Panc1 (cell line): ENCODE measurements at regions of chr9 and their contacts with region 1.

Region 1: GRCh38 chr9:102631559-102631958 is 363.6 kb upstream of the CYLC2 start:
- DNase-seq: peak; percentile 2
- ATAC-seq: no peak
- H3K4me3 ChIP-seq: no peak overlapping the region
- H3K27ac ChIP-seq: no peak overlapping the region
- H3K4me1 ChIP-seq: no peaks in the 10 kb centered on the region
- H3K27me3 ChIP-seq: no peaks in the 10 kb centered on the region
- CTCF ChIP-seq: peak; percentile 36

Region 2: GRCh38 chr9:102534031-102534430 is 97.5 kb before region 1 on chr9:
- CTCF ChIA-PET with region 1: no interaction called
- POLR2A ChIA-PET with region 1: no interaction called
- in situ Hi-C with region 1: no loop called
- intact Hi-C with region 1: no loop called
- DNase-seq: no peak
- ATAC-seq: no peak
- H3K4me3 ChIP-seq: no peak overlapping the region
- H3K27ac ChIP-seq: no peak overlapping the region
- H3K4me1 ChIP-seq: no peaks in the 10 kb centered on the region
- H3K27me3 ChIP-seq: no peaks in the 10 kb centered on the region
- CTCF ChIP-seq: no peak

Region 3: GRCh38 chr9:102642651-102643050 is 11.1 kb after region 1 on chr9:
- CTCF ChIA-PET with region 1: no interaction called
- POLR2A ChIA-PET with region 1: no interaction called
- in situ Hi-C with region 1: no loop called
- intact Hi-C with region 1: no loop called
- DNase-seq: no peak
- ATAC-seq: no peak
- H3K4me3 ChIP-seq: no peak overlapping the region
- H3K27ac ChIP-seq: no peak overlapping the region
- H3K4me1 ChIP-seq: no peaks in the 10 kb centered on the region
- H3K27me3 ChIP-seq: no peaks in the 10 kb centered on the region
- CTCF ChIP-seq: no peak

Region 4: GRCh38 chr9:102922526-102922925 is 291.0 kb after region 1 on chr9:
- CTCF ChIA-PET with region 1: no interaction called
- POLR2A ChIA-PET with region 1: interaction called, 12 read pairs
- in situ Hi-C with region 1: no loop called
- intact Hi-C with region 1: no loop called
- DNase-seq: no peak
- ATAC-seq: no peak
- H3K4me3 ChIP-seq: no peak overlapping the region
- H3K27ac ChIP-seq: no peak overlapping the region
- H3K4me1 ChIP-seq: no peaks in the 10 kb centered on the region
- H3K27me3 ChIP-seq: no peaks in the 10 kb centered on the region
- CTCF ChIP-seq: no peak

Region 5: GRCh38 chr9:104386425-104387069 is 1755.0 kb after region 1 on chr9:
- CTCF ChIA-PET with region 1: no interaction called
- POLR2A ChIA-PET with region 1: no interaction called
- in situ Hi-C with region 1: no loop called
- intact Hi-C with region 1: loop called (anchors 10 kb)
- DNase-seq: peak; percentile 8
- ATAC-seq: no peak
- H3K4me3 ChIP-seq: no peak overlapping the region
- H3K27ac ChIP-seq: no peak overlapping the region
- H3K4me1 ChIP-seq: no peaks in the 10 kb centered on the region
- H3K27me3 ChIP-seq: no peaks in the 10 kb centered on the region
- CTCF ChIP-seq: peak; percentile 58; the same call in 1 of the 2 replicates